SK-N-SH (cell line): ENCODE measurements at regions of chr10 and their contacts with region 1.

Region 1: GRCh38 chr10:76303682-76304316 is 872.4 kb downstream of the LRMDA start:
- DNase-seq: peak; percentile 70
- H3K4me3 ChIP-seq: no peak overlapping the region; a peak in 1 of 4 replicates
- H3K27ac ChIP-seq: no peak overlapping the region
- H3K4me1 ChIP-seq: peaks cover 1 to 7% of the 10 kb centered on the region in 2 experiments
- H3K27me3 ChIP-seq: no peaks in the 10 kb centered on the region
- CTCF ChIP-seq: peak; percentile 58
- EP300 ChIP-seq: no peak
- RAD21 ChIP-seq: peak; percentile 93

Region 2: GRCh38 chr10:76036111-76036940 is 267.5 kb before region 1 on chr10:
- CTCF ChIA-PET with region 1: interaction called, 10 read pairs
- POLR2A ChIA-PET with region 1: no interaction called
- DNase-seq: peak; percentile 81
- H3K4me3 ChIP-seq: peak overlapping the region in 1 of 2 experiments; percentile 45; a peak in 1 of 4 replicates
- H3K27ac ChIP-seq: no peak overlapping the region
- H3K4me1 ChIP-seq: peaks cover 0 to 27% of the 10 kb centered on the region in 2 experiments; a peak in 2 of 4 replicates
- H3K27me3 ChIP-seq: no peaks in the 10 kb centered on the region
- CTCF ChIP-seq: peak; percentile 91
- EP300 ChIP-seq: 0 out of 4 replicates have a peak, but pooled peaks of 1 of the 2 experiments have one; percentile 29
- RAD21 ChIP-seq: peak; percentile 95

Region 3: DNA sequence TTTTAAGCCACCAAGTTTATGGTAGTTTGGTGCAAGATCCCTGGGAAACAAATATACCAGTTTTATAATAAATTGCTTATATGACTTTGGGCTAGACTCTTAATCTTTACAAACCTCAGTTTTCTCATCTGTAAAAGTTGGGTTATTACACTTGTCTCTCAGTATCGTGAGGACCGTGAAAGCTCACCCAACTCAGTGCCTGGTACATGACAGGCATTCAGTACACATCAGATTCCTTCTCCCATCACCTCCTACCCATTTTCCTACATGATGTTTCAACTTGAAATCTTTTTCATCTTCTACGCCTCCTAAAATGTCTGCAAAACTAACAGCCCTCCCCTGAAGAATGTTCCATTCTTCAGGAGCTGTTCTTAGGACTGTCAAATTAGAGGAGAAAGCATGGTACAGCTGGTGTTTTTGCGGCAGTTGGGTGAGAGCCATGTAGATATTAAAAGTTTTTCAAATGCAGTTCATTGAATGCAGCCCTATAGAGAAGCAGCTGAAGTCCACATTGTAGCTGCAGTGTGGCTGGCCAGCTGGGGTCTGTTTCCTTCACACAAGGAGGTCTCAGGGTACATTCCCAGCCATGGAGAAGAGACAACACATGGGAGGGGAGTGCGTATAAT is 59.6 kb before region 1 on chr10:
- CTCF ChIA-PET with region 1: no interaction called
- POLR2A ChIA-PET with region 1: no interaction called
- DNase-seq: no peak
- H3K4me3 ChIP-seq: no peak overlapping the region
- H3K27ac ChIP-seq: no peak overlapping the region
- H3K4me1 ChIP-seq: no peaks in the 10 kb centered on the region
- H3K27me3 ChIP-seq: no peaks in the 10 kb centered on the region
- CTCF ChIP-seq: no peak
- EP300 ChIP-seq: no peak
- RAD21 ChIP-seq: no peak

Region 4: DNA sequence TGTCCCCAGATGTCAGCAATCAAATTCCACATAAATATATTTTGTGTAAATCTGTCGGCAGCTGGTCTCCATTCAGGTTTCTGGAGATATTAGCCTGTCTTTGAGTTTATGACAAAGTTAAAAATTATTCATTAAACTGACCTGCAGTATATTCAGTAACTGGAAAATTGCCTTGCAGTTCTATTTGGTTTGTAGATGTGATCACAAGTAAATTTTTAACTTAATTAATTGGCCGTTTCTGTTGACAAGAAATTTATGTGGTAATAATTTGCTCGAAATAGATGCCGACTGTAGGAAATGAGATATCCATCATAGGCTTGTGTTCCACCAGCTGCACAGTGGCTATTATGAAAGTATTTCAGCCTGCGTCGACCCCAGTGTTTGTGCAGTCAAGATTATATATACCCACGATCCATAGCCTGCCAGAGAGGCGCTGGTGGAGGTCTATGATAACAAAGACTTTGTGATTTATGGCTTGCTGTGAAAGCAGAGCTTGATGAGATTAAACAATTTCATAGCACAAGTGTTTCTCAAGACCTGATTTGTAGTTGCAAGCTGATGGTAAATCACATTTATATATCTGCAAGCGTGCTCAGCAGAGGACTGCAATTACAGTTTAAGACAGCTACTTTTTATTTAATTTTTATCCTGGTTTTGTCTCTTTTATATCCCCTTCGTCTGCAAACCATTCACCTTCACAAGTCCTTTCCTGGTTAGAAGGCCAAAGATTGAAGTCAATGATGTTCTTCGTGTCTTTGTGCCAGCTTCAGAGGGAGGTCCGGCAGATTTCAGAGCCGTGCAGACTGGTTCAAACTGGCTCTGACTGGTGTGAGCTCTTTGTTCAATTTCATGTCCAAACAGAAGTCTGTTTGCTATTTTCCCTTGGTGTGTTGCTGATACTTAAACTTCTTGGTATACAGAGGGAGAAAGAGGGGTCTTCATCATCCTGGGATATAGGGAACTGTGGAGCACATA is 21.5 kb before region 1 on chr10:
- CTCF ChIA-PET with region 1: interaction called, 11 read pairs
- POLR2A ChIA-PET with region 1: no interaction called
- DNase-seq: peak; percentile 65
- H3K4me3 ChIP-seq: no peak overlapping the region
- H3K27ac ChIP-seq: peak overlapping the region in 1 of 2 experiments; percentile 80; a peak in 2 of 4 replicates
- H3K4me1 ChIP-seq: peaks cover 11 to 17% of the 10 kb centered on the region in 2 experiments; a peak in 3 of 4 replicates
- H3K27me3 ChIP-seq: no peaks in the 10 kb centered on the region
- CTCF ChIP-seq: no peak
- EP300 ChIP-seq: peak; percentile 9 to 84; a peak in 2 of 4 replicates
- RAD21 ChIP-seq: peak; percentile 32

Region 5: GRCh38 chr10:76547352-76547972 is 243.7 kb after region 1 on chr10:
- CTCF ChIA-PET with region 1: interaction called, 26 read pairs
- POLR2A ChIA-PET with region 1: interaction called, 3 read pairs
- DNase-seq: peak; percentile 60
- H3K4me3 ChIP-seq: no peak overlapping the region
- H3K27ac ChIP-seq: peak overlapping the region in 1 of 2 experiments; percentile 34; a peak in 2 of 4 replicates
- H3K4me1 ChIP-seq: peaks cover 10 to 38% of the 10 kb centered on the region in 2 experiments; a peak in 3 of 4 replicates
- H3K27me3 ChIP-seq: no peaks in the 10 kb centered on the region
- CTCF ChIP-seq: peak; percentile 88
- EP300 ChIP-seq: no peak
- RAD21 ChIP-seq: peak; percentile 95